ENCODE measurements at regions of chr1 and their contacts with region 1.

Region 1: DNA sequence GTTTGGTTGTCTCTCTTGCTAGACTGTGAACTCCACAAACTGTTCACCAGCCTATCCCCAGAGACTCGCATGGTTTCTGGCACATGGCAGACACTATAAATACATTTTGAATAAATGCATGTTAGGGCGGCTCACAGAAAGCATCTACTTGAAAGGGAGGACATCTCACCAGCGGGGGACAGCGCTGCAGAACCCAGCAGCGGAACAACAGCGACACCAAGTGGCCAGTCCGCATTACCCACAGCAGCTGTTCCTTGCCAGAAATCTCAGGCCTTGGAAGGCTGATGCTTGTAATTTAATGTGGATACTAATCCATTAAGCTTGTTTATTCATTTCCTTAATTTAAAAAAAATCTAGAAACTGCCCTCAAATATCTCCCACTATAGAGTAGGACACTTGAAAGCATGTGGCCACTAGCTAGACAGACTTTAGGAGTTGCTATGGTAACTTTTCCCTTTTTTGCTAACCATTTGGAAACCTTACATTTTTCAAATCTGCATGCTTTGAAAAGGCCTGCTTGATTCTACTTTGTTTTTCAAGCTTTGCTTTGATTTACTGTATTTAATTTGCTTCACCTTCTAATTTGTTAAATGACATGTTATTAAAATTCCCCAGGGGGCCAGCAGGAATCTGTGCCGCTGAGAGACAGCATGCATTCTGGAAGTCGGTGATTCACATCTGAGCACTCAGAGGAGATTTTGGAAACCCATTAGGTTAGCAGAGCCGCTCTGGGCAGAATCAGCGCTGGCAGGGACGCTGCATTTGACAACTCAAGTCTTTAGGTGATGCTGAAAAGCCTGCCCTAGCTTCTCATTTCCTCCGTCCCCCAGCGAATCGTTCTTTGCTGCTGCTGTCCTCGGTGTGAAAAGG is 63.5 kb upstream of the SSX2IP start:
- DNase-seq: peak; percentile 57
- H3K4me3 Mint-ChIP-seq: no peak overlapping the region
- H3K27ac Mint-ChIP-seq: no peak overlapping the region
- H3K4me1 Mint-ChIP-seq: peaks cover 5% of the 10 kb centered on the region
- H3K27me3 Mint-ChIP-seq: peaks cover 26% of the 10 kb centered on the region

Region 2: DNA sequence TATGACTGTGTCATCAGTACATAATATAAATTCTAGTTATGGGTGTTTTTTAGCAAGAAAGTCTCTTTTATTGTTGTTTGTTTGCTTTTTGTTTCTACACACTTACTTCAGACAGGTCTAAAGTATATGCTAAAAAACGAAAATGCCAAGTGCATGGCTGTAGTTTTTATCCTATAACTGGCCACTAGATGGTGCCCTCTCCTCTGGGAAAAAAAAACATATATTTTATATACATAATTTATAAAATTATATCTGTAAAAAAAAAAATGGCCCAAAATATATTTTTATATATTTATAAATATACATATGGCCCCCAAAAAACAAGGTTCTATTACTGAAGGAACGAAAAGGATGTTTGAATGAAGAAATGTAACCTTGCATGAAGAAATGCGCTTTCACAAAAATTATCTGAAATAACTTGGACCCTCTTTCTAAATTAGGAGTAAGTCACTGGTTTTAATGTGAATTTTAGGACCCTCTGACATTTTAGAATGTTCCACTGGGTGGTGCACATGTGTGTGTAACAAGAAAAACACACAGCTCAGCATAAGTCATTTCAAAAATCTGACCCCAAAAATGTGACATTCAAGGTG is 848.3 kb before region 1 on chr1:
- intact Hi-C with region 1: loop called (anchors 1 kb)
- DNase-seq: no peak
- H3K4me3 Mint-ChIP-seq: no peak overlapping the region
- H3K27ac Mint-ChIP-seq: no peak overlapping the region
- H3K4me1 Mint-ChIP-seq: no peaks in the 10 kb centered on the region
- H3K27me3 Mint-ChIP-seq: peaks cover 13% of the 10 kb centered on the region

Region 3: GRCh38 chr1:84433258-84434080 is 320.3 kb before region 1 on chr1:
- intact Hi-C with region 1: loop called (anchors 2 kb)
- DNase-seq: peak; percentile 54
- H3K4me3 Mint-ChIP-seq: peak overlapping the region; percentile 41
- H3K27ac Mint-ChIP-seq: peak overlapping the region; percentile 9
- H3K4me1 Mint-ChIP-seq: peaks cover 11% of the 10 kb centered on the region
- H3K27me3 Mint-ChIP-seq: no peaks in the 10 kb centered on the region

Region 4: DNA sequence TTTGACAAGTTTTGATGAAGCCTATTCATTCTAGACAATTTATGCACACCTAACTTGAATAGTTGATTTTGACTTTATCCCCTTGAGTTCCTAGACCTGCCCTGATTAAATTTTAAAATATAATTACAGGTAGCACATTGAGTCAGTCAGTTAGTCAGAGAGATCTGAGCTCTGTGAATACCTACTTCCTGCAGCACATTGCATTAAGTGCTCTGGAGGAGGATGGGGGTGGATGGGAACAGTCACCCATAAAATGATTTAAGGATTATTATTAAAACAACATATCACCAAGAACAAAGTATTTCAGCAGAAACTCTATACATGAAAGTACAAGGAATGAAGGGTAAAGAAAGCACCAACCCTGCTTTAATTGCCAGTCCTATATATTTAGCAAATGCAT is 286.5 kb before region 1 on chr1:
- intact Hi-C with region 1: no loop called
- DNase-seq: no peak
- H3K4me3 Mint-ChIP-seq: no peak overlapping the region
- H3K27ac Mint-ChIP-seq: no peak overlapping the region
- H3K4me1 Mint-ChIP-seq: no peaks in the 10 kb centered on the region
- H3K27me3 Mint-ChIP-seq: peaks cover 54% of the 10 kb centered on the region

Region 5: GRCh38 chr1:84620720-84621313 is 132.9 kb before region 1 on chr1:
- intact Hi-C with region 1: loop called (anchors 1 kb)
- DNase-seq: peak; percentile 79
- H3K4me3 Mint-ChIP-seq: peak overlapping the region; percentile 88
- H3K27ac Mint-ChIP-seq: peak overlapping the region; percentile 80
- H3K4me1 Mint-ChIP-seq: peaks cover 23% of the 10 kb centered on the region
- H3K27me3 Mint-ChIP-seq: no peaks in the 10 kb centered on the region

Region 6: GRCh38 chr1:84936116-84936810 is 182.5 kb after region 1 on chr1:
- intact Hi-C with region 1: loop called (anchors 2 kb)
- DNase-seq: peak; percentile 26
- H3K4me3 Mint-ChIP-seq: no peak overlapping the region
- H3K27ac Mint-ChIP-seq: no peak overlapping the region
- H3K4me1 Mint-ChIP-seq: peaks cover 7% of the 10 kb centered on the region
- H3K27me3 Mint-ChIP-seq: no peaks in the 10 kb centered on the region